CD4-positive, alpha-beta memory T cell (primary cell): ENCODE measurements at regions of chr15 and their contacts with region 1.

Region 1: GRCh38 chr15:27342991-27343390 is 372.0 kb downstream of the GABRG3 start:
- DNase-seq: no peak
- H3K4me3 ChIP-seq: no peak overlapping the region
- H3K4me3 Mint-ChIP-seq: no peak overlapping the region
- H3K27ac ChIP-seq: no peak overlapping the region
- H3K27ac Mint-ChIP-seq: no peak overlapping the region
- H3K4me1 ChIP-seq: no peaks in the 10 kb centered on the region
- H3K4me1 Mint-ChIP-seq: no peaks in the 10 kb centered on the region
- H3K27me3 ChIP-seq: no peaks in the 10 kb centered on the region
- H3K27me3 Mint-ChIP-seq: no peaks in the 10 kb centered on the region

Region 2: DNA sequence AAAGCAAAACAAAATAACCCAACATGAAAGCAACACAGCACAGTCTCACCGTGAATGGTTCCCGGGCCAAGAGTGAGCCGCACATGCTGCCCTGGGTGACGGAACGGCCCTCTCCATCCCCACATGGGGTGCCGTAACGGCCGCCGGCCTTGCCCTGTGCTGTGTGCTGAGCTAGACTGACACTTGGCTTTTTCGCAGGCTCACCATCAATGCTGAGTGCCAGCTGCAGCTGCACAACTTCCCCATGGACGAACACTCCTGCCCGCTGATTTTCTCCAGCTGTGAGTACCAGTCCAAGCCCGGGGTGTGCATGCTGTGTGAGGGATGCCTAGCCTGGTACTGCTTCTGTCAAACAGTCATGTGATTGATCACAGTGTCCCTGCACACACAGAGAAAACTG is 14.4 kb before region 1 on chr15:
- CTCF ChIA-PET with region 1: no interaction called
- POLR2A ChIA-PET with region 1: no interaction called
- intact Hi-C with region 1: no loop called
- DNase-seq: no peak
- H3K4me3 ChIP-seq: no peak overlapping the region
- H3K4me3 Mint-ChIP-seq: no peak overlapping the region
- H3K27ac ChIP-seq: no peak overlapping the region
- H3K27ac Mint-ChIP-seq: no peak overlapping the region
- H3K4me1 ChIP-seq: no peaks in the 10 kb centered on the region
- H3K4me1 Mint-ChIP-seq: no peaks in the 10 kb centered on the region
- H3K27me3 ChIP-seq: no peaks in the 10 kb centered on the region
- H3K27me3 Mint-ChIP-seq: no peaks in the 10 kb centered on the region

Region 3: DNA sequence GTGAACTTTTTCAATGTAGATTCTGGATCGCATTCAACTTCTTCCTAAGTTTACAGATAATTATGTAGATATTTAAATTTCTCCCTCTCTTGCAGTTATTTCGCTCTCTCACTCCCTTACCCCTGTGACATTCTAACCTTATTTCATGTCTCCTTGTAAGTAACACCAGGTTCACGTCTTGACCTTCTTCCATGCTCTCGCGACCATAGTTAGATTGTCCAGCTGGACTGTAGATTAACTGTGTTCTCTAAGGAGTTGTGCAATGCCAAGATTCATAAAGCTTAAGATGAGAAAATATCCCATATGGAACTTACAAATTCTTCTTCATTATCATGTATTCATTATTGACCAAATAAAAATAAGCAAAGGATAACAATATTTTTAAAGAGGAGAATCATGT is 58.5 kb after region 1 on chr15:
- CTCF ChIA-PET with region 1: no interaction called
- POLR2A ChIA-PET with region 1: no interaction called
- intact Hi-C with region 1: loop called (anchors 10 kb)
- DNase-seq: no peak
- H3K4me3 ChIP-seq: no peak overlapping the region
- H3K4me3 Mint-ChIP-seq: no peak overlapping the region
- H3K27ac ChIP-seq: no peak overlapping the region
- H3K27ac Mint-ChIP-seq: no peak overlapping the region
- H3K4me1 ChIP-seq: no peaks in the 10 kb centered on the region
- H3K4me1 Mint-ChIP-seq: no peaks in the 10 kb centered on the region
- H3K27me3 ChIP-seq: no peaks in the 10 kb centered on the region
- H3K27me3 Mint-ChIP-seq: no peaks in the 10 kb centered on the region